CD14-positive monocyte (primary cell): ENCODE measurements at regions of chr10 and their contacts with region 1.

Region 1: DNA sequence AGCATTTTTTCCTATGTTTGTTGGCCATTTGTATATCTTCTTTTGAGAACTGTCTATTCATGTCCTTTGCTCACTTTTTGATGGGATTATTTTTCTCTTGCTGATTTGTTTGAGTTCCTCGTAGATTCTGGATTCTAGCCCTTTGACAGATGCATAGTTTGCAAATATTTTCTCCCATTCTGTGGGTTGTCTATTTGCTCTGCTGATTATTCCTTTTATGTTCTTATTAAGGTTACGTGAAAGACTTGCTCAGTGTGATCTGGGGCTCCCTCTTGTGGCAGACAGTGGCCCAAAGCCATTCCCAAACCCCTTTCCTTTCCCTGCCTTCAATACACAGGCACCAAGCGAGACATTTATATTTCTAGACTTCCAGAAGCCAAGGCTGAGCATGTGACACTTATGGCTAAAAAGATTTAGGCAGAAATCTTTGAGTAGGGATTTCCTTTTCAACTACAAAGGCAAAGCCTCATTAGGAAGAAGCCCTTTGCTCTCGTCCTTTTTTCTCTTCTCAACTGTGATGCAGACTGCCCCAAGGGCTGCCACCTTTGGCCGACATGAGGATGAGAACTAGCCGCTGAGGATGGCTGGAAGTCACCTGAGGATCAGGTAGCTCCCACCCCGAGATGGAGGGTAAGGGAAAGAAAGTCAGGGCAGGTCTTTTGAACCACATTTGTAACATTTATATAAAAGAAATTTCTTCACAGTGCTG is 23.6 kb downstream of the ST8SIA6 start:
- DNase-seq: peak; percentile 19 to 48 (median 37)
- H3K4me3 ChIP-seq: no peak overlapping the region
- H3K4me3 Mint-ChIP-seq: peak overlapping the region in 1 of 2 donors; percentile 58
- H3K27ac ChIP-seq: no peak overlapping the region
- H3K27ac Mint-ChIP-seq: no peak overlapping the region
- H3K4me1 ChIP-seq: peaks cover 19 to 29% of the 10 kb centered on the region in 2 donors
- H3K4me1 Mint-ChIP-seq: peaks cover 40% of the 10 kb centered on the region
- H3K27me3 ChIP-seq: peaks cover 0 to 7% of the 10 kb centered on the region in 2 donors
- H3K27me3 Mint-ChIP-seq: peaks cover 18 to 19% (median 19%) of the 10 kb centered on the region in 3 donors
- CTCF ChIP-seq: peak; percentile 88

Region 2: DNA sequence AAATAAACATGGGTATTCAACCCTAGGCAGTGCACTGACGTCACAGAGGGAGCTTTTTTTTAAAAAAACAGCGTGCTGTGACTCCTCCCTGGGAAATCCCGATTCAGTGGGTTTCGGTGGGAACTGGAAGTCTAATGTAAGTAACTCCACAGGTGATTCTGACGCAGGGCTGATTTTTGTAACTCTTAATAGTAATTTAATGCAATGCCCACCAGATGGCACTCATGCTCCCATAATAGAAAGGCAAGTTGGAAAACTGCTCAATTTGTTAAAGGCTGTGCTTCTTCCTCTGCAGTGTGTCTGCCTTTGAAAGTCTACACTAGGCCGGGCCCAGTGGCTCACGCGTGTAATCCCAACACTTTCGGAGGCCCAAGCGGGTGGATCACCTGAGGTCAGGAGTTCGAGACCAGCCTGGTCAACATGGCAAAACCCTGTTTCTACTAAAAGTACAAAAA is 602.7 kb before region 1 on chr10:
- intact Hi-C with region 1: loop called in 1 of 2 experiments (anchors 5 kb)
- DNase-seq: peak; percentile 51 to 83 (median 72)
- H3K4me3 ChIP-seq: no peak overlapping the region
- H3K4me3 Mint-ChIP-seq: no peak overlapping the region
- H3K27ac ChIP-seq: no peak overlapping the region
- H3K27ac Mint-ChIP-seq: peak overlapping the region in 1 of 7 donors; percentile 50
- H3K4me1 ChIP-seq: no peaks in the 10 kb centered on the region
- H3K4me1 Mint-ChIP-seq: peaks cover 12% of the 10 kb centered on the region
- H3K27me3 ChIP-seq: no peaks in the 10 kb centered on the region
- H3K27me3 Mint-ChIP-seq: peaks cover 2 to 5% (median 2%) of the 10 kb centered on the region in 3 donors
- CTCF ChIP-seq: peak; percentile 72

Region 3: DNA sequence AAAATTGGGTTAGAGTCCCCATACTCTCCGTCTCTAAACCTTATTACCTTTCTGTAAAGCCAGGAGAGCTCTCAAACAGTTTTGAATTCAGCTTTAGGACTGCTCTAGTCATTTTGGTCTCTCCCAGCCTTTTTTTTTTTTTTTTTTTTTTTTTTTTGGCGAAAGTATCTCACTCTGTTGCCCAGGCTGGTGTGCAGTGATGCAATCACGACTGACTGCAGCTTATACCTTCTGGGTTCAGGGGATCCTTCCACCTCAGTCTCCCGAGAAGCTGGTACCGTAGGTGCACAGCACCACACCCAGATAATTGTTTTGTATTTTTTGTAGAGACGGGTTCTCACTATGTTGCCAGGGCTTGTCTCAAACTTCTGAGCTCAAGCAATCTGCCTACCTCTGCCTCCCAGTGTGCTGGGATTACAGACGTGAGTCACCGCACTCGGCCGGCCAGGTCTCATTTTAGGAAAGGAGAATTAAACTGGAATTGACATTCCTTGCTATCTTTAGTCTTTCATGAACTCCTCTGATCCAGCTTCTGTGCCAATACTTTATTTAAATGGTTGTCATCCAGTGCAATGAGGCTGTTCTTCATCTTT is 582.1 kb before region 1 on chr10:
- intact Hi-C with region 1: loop called in 1 of 2 experiments (anchors 5 kb)
- DNase-seq: no peak
- H3K4me3 ChIP-seq: no peak overlapping the region
- H3K4me3 Mint-ChIP-seq: no peak overlapping the region
- H3K27ac ChIP-seq: no peak overlapping the region
- H3K27ac Mint-ChIP-seq: peak overlapping the region in 1 of 7 donors; percentile 9
- H3K4me1 ChIP-seq: no peaks in the 10 kb centered on the region
- H3K4me1 Mint-ChIP-seq: no peaks in the 10 kb centered on the region
- H3K27me3 ChIP-seq: no peaks in the 10 kb centered on the region
- H3K27me3 Mint-ChIP-seq: peaks cover 0 to 1% (median 0%) of the 10 kb centered on the region in 3 donors
- CTCF ChIP-seq: no peak

Region 4: GRCh38 chr10:17474595-17475323 is 44.0 kb after region 1 on chr10:
- intact Hi-C with region 1: no loop called
- DNase-seq: no peak
- H3K4me3 ChIP-seq: no peak overlapping the region
- H3K4me3 Mint-ChIP-seq: no peak overlapping the region
- H3K27ac ChIP-seq: peak overlapping the region in 1 of 2 donors; percentile 47
- H3K27ac Mint-ChIP-seq: peak overlapping the region in 5 of 7 donors; percentile 18 to 77 (median 31)
- H3K4me1 ChIP-seq: peaks cover 21 to 30% of the 10 kb centered on the region in 2 donors
- H3K4me1 Mint-ChIP-seq: peaks cover 31% of the 10 kb centered on the region
- H3K27me3 ChIP-seq: no peaks in the 10 kb centered on the region
- H3K27me3 Mint-ChIP-seq: peaks cover 0 to 6% (median 2%) of the 10 kb centered on the region in 3 donors
- CTCF ChIP-seq: no peak

Region 5: DNA sequence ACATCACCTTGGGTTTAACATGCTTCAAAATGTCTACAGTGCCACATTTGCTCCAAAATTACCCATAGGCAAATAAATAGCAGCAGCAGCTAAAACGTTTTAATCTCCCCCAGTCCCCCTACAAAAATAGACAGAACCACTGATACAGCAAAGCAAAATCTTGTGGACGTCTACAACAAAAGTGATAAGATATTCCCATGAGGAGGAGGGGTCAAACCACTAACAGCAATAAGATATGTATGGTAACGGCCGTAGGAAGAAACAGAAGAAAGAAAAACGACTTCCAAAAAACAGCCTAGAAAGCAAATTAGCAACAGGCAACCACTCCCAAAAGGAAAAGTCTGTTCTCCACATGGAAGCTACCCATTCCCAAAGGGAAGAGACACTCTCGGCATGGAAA is 58.0 kb after region 1 on chr10:
- intact Hi-C with region 1: no loop called
- DNase-seq: no peak
- H3K4me3 ChIP-seq: no peak overlapping the region
- H3K4me3 Mint-ChIP-seq: no peak overlapping the region
- H3K27ac ChIP-seq: no peak overlapping the region
- H3K27ac Mint-ChIP-seq: no peak overlapping the region
- H3K4me1 ChIP-seq: no peaks in the 10 kb centered on the region
- H3K4me1 Mint-ChIP-seq: peaks cover 7% of the 10 kb centered on the region
- H3K27me3 ChIP-seq: no peaks in the 10 kb centered on the region
- H3K27me3 Mint-ChIP-seq: no peaks in the 10 kb centered on the region
- CTCF ChIP-seq: no peak

Region 6: DNA sequence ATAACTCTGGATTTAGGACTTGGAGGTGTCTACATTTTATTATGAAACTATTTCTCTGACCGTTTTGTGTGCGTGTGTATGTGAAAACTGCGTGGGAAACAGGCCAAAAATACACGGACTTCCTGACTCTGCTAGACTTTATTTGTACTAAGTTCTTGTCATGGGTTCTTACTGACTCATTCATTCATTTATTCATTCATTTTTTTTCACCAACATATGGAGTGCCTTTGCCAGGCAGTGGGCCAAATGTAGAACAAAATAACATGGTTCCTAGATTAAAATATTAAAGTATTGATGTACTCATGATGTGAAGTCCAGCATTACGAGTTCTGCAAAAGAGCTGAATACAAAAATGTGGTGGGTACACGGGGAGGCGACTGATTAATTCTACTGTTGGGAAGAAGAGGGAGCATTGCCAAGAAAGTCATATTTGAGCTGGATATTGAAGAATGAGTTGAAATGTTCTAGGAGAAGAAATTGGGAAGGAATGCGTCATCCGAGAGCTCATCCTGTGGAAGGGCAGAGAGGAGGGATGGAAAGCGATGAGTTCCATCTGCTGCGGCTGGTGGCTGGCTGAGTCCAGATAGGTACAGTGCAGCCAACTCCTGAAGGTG is 734.1 kb after region 1 on chr10:
- intact Hi-C with region 1: no loop called
- DNase-seq: no peak
- H3K4me3 ChIP-seq: no peak overlapping the region
- H3K4me3 Mint-ChIP-seq: no peak overlapping the region
- H3K27ac ChIP-seq: no peak overlapping the region
- H3K27ac Mint-ChIP-seq: no peak overlapping the region
- H3K4me1 ChIP-seq: no peaks in the 10 kb centered on the region
- H3K4me1 Mint-ChIP-seq: no peaks in the 10 kb centered on the region
- H3K27me3 ChIP-seq: no peaks in the 10 kb centered on the region
- H3K27me3 Mint-ChIP-seq: peaks cover 0 to 4% (median 3%) of the 10 kb centered on the region in 3 donors
- CTCF ChIP-seq: no peak